Naive thymus-derived CD4-positive, alpha-beta T cell (primary cell): ENCODE measurements at regions of chr17 and their contacts with region 1.

Region 1: DNA sequence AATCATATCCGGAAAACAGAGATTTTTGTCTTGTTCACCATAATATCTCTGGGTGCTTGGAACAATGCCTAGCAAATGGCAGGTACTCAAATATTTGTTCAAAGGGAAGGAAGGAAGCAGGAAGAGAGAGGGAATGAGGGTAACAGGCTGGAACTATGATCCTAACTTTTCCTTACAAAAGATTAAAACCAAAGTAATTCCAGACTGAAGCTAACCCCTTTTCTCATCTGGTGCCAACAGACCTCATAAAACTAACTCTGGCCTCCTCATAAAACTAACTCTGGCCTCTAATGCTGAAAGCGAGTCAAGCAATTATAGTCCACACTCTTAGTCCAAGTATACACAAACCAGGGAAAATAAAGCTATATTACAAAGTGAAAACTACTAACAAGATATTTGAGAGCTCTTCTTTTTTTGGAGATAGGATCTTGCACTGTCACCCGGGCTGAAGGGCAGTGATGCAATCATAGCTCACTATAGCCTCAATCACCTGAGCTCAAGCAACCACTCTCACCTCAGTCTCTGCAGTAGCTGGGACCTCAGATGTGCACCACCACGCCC is 84.6 kb downstream of the KANSL1 start:
- DNase-seq: no peak
- ATAC-seq: peak; percentile 65
- H3K4me3 ChIP-seq: no peak overlapping the region
- H3K4me3 Mint-ChIP-seq: peak overlapping the region in 6 of 10 donors; percentile 0 to 55 (median 31)
- H3K27ac ChIP-seq: peak overlapping the region; percentile 6
- H3K27ac Mint-ChIP-seq: peak overlapping the region in 7 of 9 donors; percentile 28 to 70 (median 48)
- H3K4me1 ChIP-seq: peaks cover 47 to 60% of the 10 kb centered on the region in 2 donors
- H3K4me1 Mint-ChIP-seq: peaks cover 44 to 98% (median 83%) of the 10 kb centered on the region in 7 donors
- H3K27me3 ChIP-seq: no peaks in the 10 kb centered on the region
- H3K27me3 Mint-ChIP-seq: no peaks in the 10 kb centered on the region

Region 2: GRCh38 chr17:46097497-46097896 is 11.1 kb before region 1 on chr17:
- CTCF ChIA-PET with region 1: no interaction called
- POLR2A ChIA-PET with region 1: no interaction called
- intact Hi-C with region 1: loop called in 1 of 2 experiments (anchors 2 kb)
- DNase-seq: no peak
- ATAC-seq: no peak
- H3K4me3 ChIP-seq: no peak overlapping the region
- H3K4me3 Mint-ChIP-seq: peak overlapping the region in 3 of 10 donors; percentile 1 to 40 (median 12)
- H3K27ac ChIP-seq: no peak overlapping the region
- H3K27ac Mint-ChIP-seq: peak overlapping the region in 6 of 9 donors; percentile 1 to 37 (median 25)
- H3K4me1 ChIP-seq: peaks cover 27 to 36% of the 10 kb centered on the region in 2 donors
- H3K4me1 Mint-ChIP-seq: peaks cover 51 to 88% (median 80%) of the 10 kb centered on the region in 7 donors
- H3K27me3 ChIP-seq: no peaks in the 10 kb centered on the region
- H3K27me3 Mint-ChIP-seq: no peaks in the 10 kb centered on the region

Region 3: GRCh38 chr17:46121841-46122485 is 13.3 kb after region 1 on chr17:
- CTCF ChIA-PET with region 1: no interaction called
- POLR2A ChIA-PET with region 1: no interaction called
- intact Hi-C with region 1: loop called in 1 of 2 experiments (anchors 2 kb)
- DNase-seq: no peak
- ATAC-seq: peak; percentile 54
- H3K4me3 ChIP-seq: no peak overlapping the region
- H3K4me3 Mint-ChIP-seq: peak overlapping the region; percentile 13 to 77 (median 54)
- H3K27ac ChIP-seq: no peak overlapping the region
- H3K27ac Mint-ChIP-seq: peak overlapping the region; percentile 35 to 83 (median 67)
- H3K4me1 ChIP-seq: peaks cover 45 to 60% of the 10 kb centered on the region in 2 donors
- H3K4me1 Mint-ChIP-seq: peaks cover 52 to 96% (median 92%) of the 10 kb centered on the region in 7 donors
- H3K27me3 ChIP-seq: no peaks in the 10 kb centered on the region
- H3K27me3 Mint-ChIP-seq: no peaks in the 10 kb centered on the region